ENCODE measurements at regions of chr1 and their contacts with region 1.

Region 1: GRCh38 chr1:171530676-171531075 is 45.3 kb downstream of the PRRC2C start:
- DNase-seq: no peak
- H3K4me3 ChIP-seq: no peak overlapping the region
- H3K27ac ChIP-seq: no peak overlapping the region
- H3K4me1 ChIP-seq: no peaks in the 10 kb centered on the region
- CTCF ChIP-seq: no peak

Region 2: GRCh38 chr1:171515299-171515698 is 15.4 kb before region 1 on chr1:
- CTCF ChIA-PET with region 1: no interaction called
- POLR2A ChIA-PET with region 1: interaction called, 14 read pairs
- intact Hi-C with region 1: no loop called
- DNase-seq: no peak
- H3K4me3 ChIP-seq: no peak overlapping the region
- H3K27ac ChIP-seq: no peak overlapping the region
- H3K4me1 ChIP-seq: no peaks in the 10 kb centered on the region
- CTCF ChIP-seq: no peak

Region 3: DNA sequence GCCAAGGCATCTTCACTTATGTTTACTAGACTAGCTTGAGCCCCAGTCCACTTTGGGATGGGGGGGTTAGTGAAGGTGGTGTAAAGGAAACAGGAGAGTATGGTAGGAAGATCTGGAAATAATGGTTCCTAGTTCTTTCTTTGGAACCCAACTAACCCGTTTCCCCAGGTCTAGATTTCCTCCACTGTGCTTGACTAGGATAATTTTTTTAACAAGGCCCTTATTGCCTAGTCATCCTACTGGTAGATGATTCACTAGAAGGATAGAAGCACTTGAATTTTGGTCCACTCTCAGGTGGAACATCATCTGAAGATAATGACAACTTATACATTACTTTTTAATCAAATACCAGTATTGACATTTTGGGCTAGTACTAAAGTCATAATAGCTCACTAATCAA is 45.5 kb after region 1 on chr1:
- CTCF ChIA-PET with region 1: no interaction called
- POLR2A ChIA-PET with region 1: no interaction called
- intact Hi-C with region 1: loop called (anchors 5 kb)
- DNase-seq: no peak
- H3K4me3 ChIP-seq: no peak overlapping the region
- H3K27ac ChIP-seq: no peak overlapping the region
- H3K4me1 ChIP-seq: no peaks in the 10 kb centered on the region
- CTCF ChIP-seq: no peak